Activated CD4-positive, alpha-beta T cell treated with anti-CD3 and anti-CD28 coated beads, Interleukin-2, amount 10 ng/mL, durations not matched to agents 7 days and 5 days (primary cell): ENCODE measurements at regions of chr4 and their contacts with region 1.

Region 1: DNA sequence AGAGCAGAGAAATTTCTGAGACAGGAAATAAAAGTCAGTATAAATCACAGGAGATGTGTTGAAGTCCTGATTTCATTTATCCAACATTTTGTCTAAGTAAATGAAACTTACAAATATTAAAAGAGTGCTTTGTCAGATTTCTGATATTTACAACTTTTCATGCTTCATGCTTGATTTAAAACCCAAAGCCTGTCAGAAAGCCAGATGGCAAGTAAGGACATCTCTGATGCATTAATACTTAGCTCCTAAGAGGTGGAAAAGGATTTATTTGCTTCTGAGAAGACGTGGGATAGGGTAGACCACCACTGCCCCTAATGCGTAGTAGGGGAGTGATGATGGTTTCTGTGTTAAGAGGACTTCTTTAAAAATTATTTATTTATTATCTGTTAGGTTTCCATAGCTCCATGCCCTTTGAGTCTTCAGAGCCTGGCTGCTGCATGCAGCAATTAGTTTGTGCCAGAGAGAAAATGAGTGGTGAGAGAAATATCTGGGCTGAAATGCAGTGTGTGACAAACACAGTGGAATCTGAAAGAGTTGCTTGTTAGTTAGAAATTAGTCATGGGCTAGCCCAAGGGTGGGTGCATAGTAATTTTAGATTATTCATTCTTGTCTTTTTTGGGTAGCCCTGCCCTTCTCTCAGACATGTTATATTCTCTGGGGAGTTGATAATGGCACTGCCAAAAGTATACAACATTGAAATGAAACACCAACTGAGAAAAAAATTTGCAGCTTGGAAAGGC is 333.8 kb downstream of the C4orf33 start:
- DNase-seq: no peak
- H3K4me3 Mint-ChIP-seq: no peak overlapping the region
- H3K27ac Mint-ChIP-seq: no peak overlapping the region
- H3K4me1 Mint-ChIP-seq: no peaks in the 10 kb centered on the region
- H3K27me3 Mint-ChIP-seq: no peaks in the 10 kb centered on the region

Region 2: DNA sequence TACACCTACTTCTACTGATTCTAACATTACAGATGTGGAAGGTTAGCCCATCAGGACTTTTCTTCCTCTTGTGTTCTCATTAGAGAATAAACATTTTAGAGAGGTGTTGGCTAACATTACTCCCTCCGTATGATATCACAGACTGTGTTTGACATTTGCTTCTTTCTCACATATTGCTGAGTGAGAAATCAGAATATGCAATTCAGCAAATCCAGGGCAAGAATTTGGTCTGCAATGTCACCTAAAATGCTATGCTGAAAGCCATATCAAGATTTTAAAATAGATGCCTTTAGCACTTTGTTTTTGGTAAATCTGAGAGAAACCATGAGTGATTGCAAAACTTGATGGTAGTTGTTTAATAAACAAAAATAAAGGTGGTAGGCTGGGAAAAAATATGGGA is 14.7 kb before region 1 on chr4:
- CTCF ChIA-PET with region 1: no interaction called
- POLR2A ChIA-PET with region 1: no interaction called
- DNase-seq: no peak
- H3K4me3 Mint-ChIP-seq: no peak overlapping the region
- H3K27ac Mint-ChIP-seq: no peak overlapping the region
- H3K4me1 Mint-ChIP-seq: no peaks in the 10 kb centered on the region
- H3K27me3 Mint-ChIP-seq: no peaks in the 10 kb centered on the region

Region 3: GRCh38 chr4:129446074-129446473 is 16.3 kb after region 1 on chr4:
- CTCF ChIA-PET with region 1: no interaction called
- POLR2A ChIA-PET with region 1: no interaction called
- DNase-seq: no peak
- H3K4me3 Mint-ChIP-seq: no peak overlapping the region
- H3K27ac Mint-ChIP-seq: no peak overlapping the region
- H3K4me1 Mint-ChIP-seq: no peaks in the 10 kb centered on the region
- H3K27me3 Mint-ChIP-seq: no peaks in the 10 kb centered on the region

Region 4: GRCh38 chr4:129545599-129546278 is 116.0 kb after region 1 on chr4:
- CTCF ChIA-PET with region 1: no interaction called
- POLR2A ChIA-PET with region 1: interaction called, 10 read pairs
- DNase-seq: no peak
- H3K4me3 Mint-ChIP-seq: no peak overlapping the region
- H3K27ac Mint-ChIP-seq: no peak overlapping the region
- H3K4me1 Mint-ChIP-seq: peaks cover 9% of the 10 kb centered on the region
- H3K27me3 Mint-ChIP-seq: no peaks in the 10 kb centered on the region